ENCODE measurements at regions of chr6 and their contacts with region 1.

Region 1: GRCh38 chr6:134938896-134939295 is 11.0 kb downstream of the ALDH8A1 start:
- DNase-seq: no peak
- H3K4me3 ChIP-seq: no peak overlapping the region
- H3K27ac ChIP-seq: no peak overlapping the region
- H3K4me1 ChIP-seq: peaks cover 0 to 22% (median 17%) of the 10 kb centered on the region in 4 donors
- H3K27me3 ChIP-seq: no peaks in the 10 kb centered on the region
- CTCF ChIP-seq: no peak
- EP300 ChIP-seq: no peak
- POLR2A ChIP-seq: no peak

Region 2: GRCh38 chr6:134161036-134161435 is 777.9 kb before region 1 on chr6:
- intact Hi-C with region 1: loop called (anchors 5 kb)
- DNase-seq: no peak
- H3K4me3 ChIP-seq: no peak overlapping the region
- H3K27ac ChIP-seq: no peak overlapping the region
- H3K4me1 ChIP-seq: no peaks in the 10 kb centered on the region
- H3K27me3 ChIP-seq: no peaks in the 10 kb centered on the region
- CTCF ChIP-seq: no peak
- EP300 ChIP-seq: no peak
- POLR2A ChIP-seq: no peak

Region 3: GRCh38 chr6:134640975-134641429 is 297.9 kb before region 1 on chr6:
- intact Hi-C with region 1: loop called (anchors 5 kb)
- DNase-seq: peak; percentile 94
- H3K4me3 ChIP-seq: no peak overlapping the region
- H3K27ac ChIP-seq: no peak overlapping the region
- H3K4me1 ChIP-seq: peaks cover 0 to 6% (median 3%) of the 10 kb centered on the region in 4 donors
- H3K27me3 ChIP-seq: no peaks in the 10 kb centered on the region
- CTCF ChIP-seq: peak; percentile 91 to 93 (median 92)
- EP300 ChIP-seq: no peak
- POLR2A ChIP-seq: no peak

Region 4: DNA sequence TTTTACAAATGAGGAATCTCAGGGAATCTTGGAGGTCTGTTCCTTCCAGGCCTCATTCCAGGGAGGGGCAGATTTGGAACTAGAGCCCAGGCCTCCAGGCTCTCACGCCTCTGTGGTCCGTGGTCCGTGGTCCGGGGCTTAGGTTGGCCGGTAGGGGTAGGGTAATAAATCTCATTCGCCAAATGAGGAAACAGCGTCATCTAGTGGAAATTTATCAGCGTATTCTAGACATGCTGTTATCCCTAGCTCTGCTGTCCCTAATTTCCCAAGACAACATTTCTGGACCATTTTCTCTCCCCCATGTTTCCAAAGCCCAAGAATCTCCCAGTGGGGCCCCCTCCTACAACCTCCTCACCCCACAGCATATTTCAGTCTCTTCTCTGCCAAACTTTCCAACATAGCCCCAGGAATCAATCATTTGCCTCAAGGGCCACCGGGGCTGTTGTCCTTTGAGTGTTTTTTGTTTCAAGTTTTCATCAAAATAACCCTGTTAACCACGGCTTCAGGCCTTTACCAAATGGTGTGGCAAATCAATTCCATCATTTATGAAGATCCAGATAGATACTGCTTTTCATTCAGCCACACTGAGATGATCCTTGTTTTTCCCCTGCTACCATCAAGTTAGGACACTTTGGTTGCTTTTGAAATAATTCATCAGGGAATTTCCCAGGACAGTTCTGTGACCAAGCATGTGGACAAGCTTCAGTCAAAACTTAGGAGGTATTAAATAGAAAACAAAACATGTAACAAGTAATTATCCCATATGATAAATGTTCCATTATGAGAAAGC is 115.8 kb before region 1 on chr6:
- intact Hi-C with region 1: loop called (anchors 5 kb)
- DNase-seq: no peak
- H3K4me3 ChIP-seq: no peak overlapping the region
- H3K27ac ChIP-seq: no peak overlapping the region
- H3K4me1 ChIP-seq: peaks cover 0 to 23% (median 21%) of the 10 kb centered on the region in 4 donors
- H3K27me3 ChIP-seq: no peaks in the 10 kb centered on the region
- CTCF ChIP-seq: peak; percentile 76 to 83 (median 80)
- EP300 ChIP-seq: no peak
- POLR2A ChIP-seq: no peak

Region 5: DNA sequence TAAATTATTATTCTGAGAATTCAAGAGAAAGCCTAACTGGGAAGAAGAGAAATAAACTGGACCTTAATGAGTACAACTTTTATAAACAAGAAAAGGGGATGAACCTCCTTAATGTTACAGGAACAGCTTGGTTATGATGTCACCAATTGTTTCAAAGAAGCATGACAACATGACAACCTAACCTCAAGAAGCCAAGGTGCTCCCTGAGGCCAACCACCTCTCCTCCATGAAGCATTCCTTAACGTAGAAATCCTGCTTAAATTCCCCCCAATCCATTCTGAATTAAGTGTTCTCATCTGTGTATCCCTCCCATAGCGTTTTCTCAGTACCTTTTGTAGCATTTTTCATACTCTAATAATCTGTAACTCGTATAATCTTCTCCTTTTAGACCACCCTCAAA is 114.0 kb after region 1 on chr6:
- intact Hi-C with region 1: no loop called
- DNase-seq: no peak
- H3K4me3 ChIP-seq: peak overlapping the region in 1 of 4 donors; percentile 82
- H3K27ac ChIP-seq: no peak overlapping the region
- H3K4me1 ChIP-seq: peaks cover 7 to 41% (median 23%) of the 10 kb centered on the region in 4 donors
- H3K27me3 ChIP-seq: no peaks in the 10 kb centered on the region
- CTCF ChIP-seq: no peak
- EP300 ChIP-seq: no peak
- POLR2A ChIP-seq: no peak

Region 6: GRCh38 chr6:135224037-135224647 is 285.2 kb after region 1 on chr6:
- intact Hi-C with region 1: no loop called
- DNase-seq: no peak
- H3K4me3 ChIP-seq: no peak overlapping the region
- H3K27ac ChIP-seq: no peak overlapping the region
- H3K4me1 ChIP-seq: no peaks in the 10 kb centered on the region
- H3K27me3 ChIP-seq: no peaks in the 10 kb centered on the region
- CTCF ChIP-seq: no peak
- EP300 ChIP-seq: no peak
- POLR2A ChIP-seq: no peak